Caco-2 (cell line): ENCODE measurements at regions of chr1 and their contacts with region 1.

Region 1: GRCh38 chr1:15911141-15911540 is 63.6 kb downstream of the SPEN start:
- DNase-seq: no peak
- H3K4me3 ChIP-seq: no peak overlapping the region
- H3K4me3 Mint-ChIP-seq: no peak overlapping the region
- H3K27ac Mint-ChIP-seq: no peak overlapping the region
- H3K4me1 ChIP-seq: no peaks in the 10 kb centered on the region
- H3K4me1 Mint-ChIP-seq: no peaks in the 10 kb centered on the region
- H3K27me3 ChIP-seq: no peaks in the 10 kb centered on the region
- H3K27me3 Mint-ChIP-seq: no peaks in the 10 kb centered on the region
- CTCF ChIP-seq: no peak

Region 2: GRCh38 chr1:16913833-16914662 is 1002.9 kb after region 1 on chr1:
- CTCF ChIA-PET with region 1: interaction called, 12 read pairs
- POLR2A ChIA-PET with region 1: no interaction called
- intact Hi-C with region 1: no loop called
- DNase-seq: peak; percentile 91 to 95
- H3K4me3 ChIP-seq: peak overlapping the region; percentile 82
- H3K4me3 Mint-ChIP-seq: peak overlapping the region; percentile 85
- H3K27ac Mint-ChIP-seq: peak overlapping the region; percentile 71
- H3K4me1 ChIP-seq: peaks cover 4% of the 10 kb centered on the region; the same call in 1 of the 2 replicates
- H3K4me1 Mint-ChIP-seq: peaks cover 16% of the 10 kb centered on the region
- H3K27me3 ChIP-seq: no peaks in the 10 kb centered on the region
- H3K27me3 Mint-ChIP-seq: no peaks in the 10 kb centered on the region
- CTCF ChIP-seq: peak in 1 of 2 experiments; percentile 13